Activated T-helper 1 cell treated with anti-CD3 and anti-CD28 coated beads, Interleukin-12 subunit alpha, Interleukin-12 subunit beta, Interleukin-2, Interleukin-4 antibody, amounts not matched to agents 30 ng/mL and 10 ng/mL and 1 ng/mL, durations not matched to agents 14 hours and 24 hours and 36 hours (primary cell): ENCODE measurements at regions of chr5 and their contacts with region 1.

Region 1: GRCh38 chr5:160508780-160509361 is 87.2 kb downstream of the PTTG1 start:
- DNase-seq: peak; percentile 67
- H3K4me3 Mint-ChIP-seq: peak overlapping the region; percentile 19
- H3K27ac Mint-ChIP-seq: peak overlapping the region; percentile 66
- H3K4me1 Mint-ChIP-seq: peaks cover 67% of the 10 kb centered on the region
- H3K27me3 Mint-ChIP-seq: peaks cover 5% of the 10 kb centered on the region

Region 2: GRCh38 chr5:160418561-160419457 is 90.1 kb before region 1 on chr5 and contains the start of gene SLU7:
- intact Hi-C with region 1: loop called (anchors 1 kb)
- DNase-seq: peak; percentile 91
- H3K4me3 Mint-ChIP-seq: peak within 1 kb of the TSS; percentile 94
- H3K27ac Mint-ChIP-seq: peak within 1 kb of the TSS; percentile 95
- H3K4me1 Mint-ChIP-seq: peaks cover 77% of the 10 kb centered on the region
- H3K27me3 Mint-ChIP-seq: no peaks in the 10 kb centered on the region
- total RNA-seq, gene SLU7: 37.4 and 47.4 TPM in 2 replicates

Region 3: DNA sequence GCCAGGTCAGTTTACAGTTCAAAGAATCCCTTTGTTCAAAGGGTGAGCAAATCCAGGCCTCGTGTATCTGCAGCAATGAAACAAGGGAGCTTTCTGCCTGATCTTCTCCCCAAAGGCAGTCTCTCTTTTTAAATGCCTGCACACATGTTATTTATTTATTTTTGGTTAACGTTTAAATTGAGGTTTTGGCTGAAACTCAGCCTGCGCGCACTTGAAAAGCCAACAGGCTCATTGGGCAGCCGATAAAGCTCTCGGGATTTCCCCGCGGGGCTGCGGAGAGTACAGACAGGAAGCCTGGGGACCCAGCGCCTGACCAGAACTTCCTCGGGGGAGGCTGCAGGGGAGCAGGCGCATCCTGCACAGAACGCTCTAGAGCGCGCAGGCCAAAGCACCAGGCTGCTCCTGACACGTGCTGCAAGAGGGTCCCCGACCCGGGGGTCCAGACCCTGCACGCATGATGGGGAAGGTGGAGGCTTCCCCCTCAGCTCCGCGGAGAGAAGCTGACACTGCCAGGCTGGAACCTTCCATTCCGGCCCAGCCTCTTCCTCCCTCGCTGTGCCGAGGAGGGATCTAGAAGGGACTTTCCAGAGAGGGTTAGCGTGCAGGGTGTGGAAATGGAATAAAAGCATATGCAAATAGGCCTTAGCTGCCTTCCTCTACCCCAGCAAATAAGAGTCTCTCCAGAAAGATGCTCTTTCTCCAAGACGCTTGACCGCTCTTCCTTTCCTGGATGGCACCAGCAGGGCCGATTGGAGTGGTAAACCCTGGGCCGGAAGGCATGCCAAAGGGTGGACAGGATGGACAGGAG is 41.1 kb before region 1 on chr5:
- intact Hi-C with region 1: loop called (anchors 1 kb)
- DNase-seq: peak; percentile 85
- H3K4me3 Mint-ChIP-seq: peak overlapping the region; percentile 100
- H3K27ac Mint-ChIP-seq: peak overlapping the region; percentile 100
- H3K4me1 Mint-ChIP-seq: peaks cover 68% of the 10 kb centered on the region
- H3K27me3 Mint-ChIP-seq: no peaks in the 10 kb centered on the region

Region 4: GRCh38 chr5:160539431-160539830 is 30.6 kb after region 1 on chr5:
- intact Hi-C with region 1: loop called (anchors 1 kb)
- DNase-seq: no peak
- H3K4me3 Mint-ChIP-seq: no peak overlapping the region
- H3K27ac Mint-ChIP-seq: no peak overlapping the region
- H3K4me1 Mint-ChIP-seq: peaks cover 19% of the 10 kb centered on the region
- H3K27me3 Mint-ChIP-seq: no peaks in the 10 kb centered on the region

Region 5: GRCh38 chr5:160787240-160787639 is 278.4 kb after region 1 on chr5:
- intact Hi-C with region 1: loop called (anchors 1 kb)
- DNase-seq: no peak
- H3K4me3 Mint-ChIP-seq: no peak overlapping the region
- H3K27ac Mint-ChIP-seq: no peak overlapping the region
- H3K4me1 Mint-ChIP-seq: no peaks in the 10 kb centered on the region
- H3K27me3 Mint-ChIP-seq: peaks cover 2% of the 10 kb centered on the region

Region 6: DNA sequence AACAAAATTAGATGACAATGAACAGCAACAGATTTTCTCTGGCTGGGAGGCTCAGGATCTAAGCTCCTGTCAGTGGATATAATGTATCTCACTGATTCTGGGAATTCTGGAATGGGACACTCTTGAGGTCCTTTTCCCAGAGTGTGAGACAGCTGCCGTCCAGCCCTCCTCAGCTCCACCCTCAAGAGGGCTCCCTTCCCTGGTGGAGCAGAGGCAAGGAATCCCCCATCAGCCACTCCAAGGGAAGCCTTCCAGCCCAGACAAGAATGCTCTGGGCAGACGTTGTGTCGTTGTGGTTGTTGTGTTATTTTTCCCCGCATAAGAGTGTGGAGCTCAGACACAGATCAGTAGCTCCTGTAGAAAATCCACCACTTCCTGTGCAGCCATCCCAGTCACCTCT is 390.9 kb after region 1 on chr5:
- intact Hi-C with region 1: loop called (anchors 5 kb)
- DNase-seq: no peak
- H3K4me3 Mint-ChIP-seq: no peak overlapping the region
- H3K27ac Mint-ChIP-seq: no peak overlapping the region
- H3K4me1 Mint-ChIP-seq: no peaks in the 10 kb centered on the region
- H3K27me3 Mint-ChIP-seq: no peaks in the 10 kb centered on the region

Region 7: DNA sequence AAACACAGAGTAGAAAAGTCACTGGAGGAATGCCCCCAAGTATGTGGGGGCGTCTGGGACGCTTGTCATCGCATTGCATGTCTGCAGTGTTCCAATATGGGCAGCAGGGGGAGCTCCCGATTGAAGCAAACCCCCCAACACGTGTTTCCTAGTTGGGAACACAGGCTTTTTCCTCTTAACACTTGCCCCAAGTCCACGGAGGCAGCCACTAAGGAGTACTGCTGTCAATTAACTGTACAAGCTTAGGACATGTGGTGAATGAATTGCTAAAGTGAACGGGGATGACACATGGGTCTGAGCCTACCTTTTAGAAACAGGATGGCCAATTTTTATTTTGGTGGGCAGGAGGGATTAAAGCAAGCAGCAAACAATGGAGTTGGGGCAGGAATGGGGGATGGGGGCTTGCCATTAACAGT is 1035.5 kb after region 1 on chr5:
- intact Hi-C with region 1: loop called (anchors 1 kb)
- DNase-seq: no peak
- H3K4me3 Mint-ChIP-seq: no peak overlapping the region
- H3K27ac Mint-ChIP-seq: peak overlapping the region; percentile 6
- H3K4me1 Mint-ChIP-seq: peaks cover 22% of the 10 kb centered on the region
- H3K27me3 Mint-ChIP-seq: peaks cover 40% of the 10 kb centered on the region